Activated CD4-positive, alpha-beta memory T cell treated with anti-CD3 and anti-CD28 coated beads for 36 hours (primary cell): ENCODE measurements at regions of chr5 and their contacts with region 1.

Region 1: GRCh38 chr5:5467737-5468136 is 45.3 kb downstream of the ICE1 start:
- DNase-seq: no peak
- H3K4me3 Mint-ChIP-seq: no peak overlapping the region
- H3K27ac Mint-ChIP-seq: no peak overlapping the region
- H3K4me1 Mint-ChIP-seq: no peaks in the 10 kb centered on the region
- H3K27me3 Mint-ChIP-seq: no peaks in the 10 kb centered on the region

Region 2: DNA sequence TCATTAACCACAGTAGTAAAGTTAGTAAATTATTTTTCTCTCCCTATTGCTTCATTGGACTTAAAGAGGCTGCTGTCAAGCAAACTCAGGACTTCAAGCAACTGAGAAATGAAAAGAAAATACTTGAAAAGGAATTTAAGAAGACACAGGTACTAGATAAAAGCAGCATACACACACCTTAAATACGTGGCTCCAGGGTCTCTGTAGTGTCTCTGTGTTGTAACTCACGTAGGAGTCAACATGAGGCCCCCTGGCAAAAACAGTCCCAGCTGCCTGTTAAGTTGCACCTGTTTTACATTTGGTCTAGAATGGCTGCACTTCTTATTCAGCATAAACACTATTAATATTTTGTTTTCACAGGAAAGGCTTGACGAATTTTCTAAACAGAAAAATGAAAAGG is 20.4 kb before region 1 on chr5:
- CTCF ChIA-PET with region 1: no interaction called
- POLR2A ChIA-PET with region 1: no interaction called
- intact Hi-C with region 1: loop called (anchors 2 kb)
- DNase-seq: no peak
- H3K4me3 Mint-ChIP-seq: no peak overlapping the region
- H3K27ac Mint-ChIP-seq: no peak overlapping the region
- H3K4me1 Mint-ChIP-seq: no peaks in the 10 kb centered on the region
- H3K27me3 Mint-ChIP-seq: no peaks in the 10 kb centered on the region